Activated CD8-positive, alpha-beta T cell treated with anti-CD3 and anti-CD28 coated beads, Interleukin-2, amount 10 ng/mL, durations not matched to agents 7 days and 5 days (primary cell): ENCODE measurements at regions of chr4 and their contacts with region 1.

Region 1: DNA sequence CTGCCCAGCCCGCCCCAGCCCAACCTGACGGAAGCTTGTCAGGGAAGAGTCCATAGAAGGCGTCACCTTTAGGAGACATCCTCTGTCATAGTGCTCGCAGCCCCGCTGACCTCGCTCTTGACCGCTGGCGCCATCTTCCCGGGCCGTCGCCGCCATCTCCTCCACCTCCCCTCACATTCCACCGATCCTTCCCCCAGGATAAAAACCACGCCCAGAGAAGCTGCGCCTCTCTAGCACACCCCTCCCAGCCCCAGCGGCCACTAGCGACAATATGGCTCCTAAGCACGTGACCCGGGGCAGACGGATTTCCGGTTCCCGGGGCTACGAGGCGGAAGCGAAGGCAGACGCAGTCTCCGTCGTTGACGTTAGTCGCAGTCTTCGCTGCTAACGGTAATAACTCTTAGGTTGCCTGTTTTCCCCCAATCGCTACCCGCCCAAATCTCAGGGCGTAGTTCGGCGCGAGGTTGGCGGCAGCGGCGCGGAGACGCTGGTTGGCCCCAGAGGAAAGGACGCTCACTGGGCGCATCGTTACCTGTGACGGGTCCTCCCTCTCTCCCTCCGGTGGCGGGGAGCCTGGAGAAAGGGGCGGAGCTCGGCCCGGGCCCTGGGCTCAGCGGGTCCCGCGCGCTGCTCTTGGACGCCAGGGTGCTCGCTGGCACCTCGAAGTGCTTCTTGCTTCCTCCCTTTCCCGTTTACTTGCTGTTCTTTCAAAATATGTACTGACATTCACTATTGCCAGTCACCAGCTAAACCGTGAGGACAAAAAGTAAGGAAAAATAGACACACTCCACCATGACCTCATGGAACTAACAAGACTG is at the starts of genes RCHY1 and THAP6:
- DNase-seq: peak; percentile 95
- ATAC-seq: peak; percentile 94
- H3K4me3 Mint-ChIP-seq: no peak within 1 kb of the TSS
- H3K27ac Mint-ChIP-seq: peak within 1 kb of the TSS; percentile 100
- H3K4me1 Mint-ChIP-seq: peaks cover 47% of the 10 kb centered on the region
- H3K27me3 Mint-ChIP-seq: no peaks in the 10 kb centered on the region
- total RNA-seq, gene RCHY1: 20.0 to 25.3 TPM
- total RNA-seq, gene THAP6: 16.1 to 16.7 TPM

Region 2: GRCh38 chr4:74838746-74839370 is 675.5 kb before region 1 on chr4:
- CTCF ChIA-PET with region 1: no interaction called
- POLR2A ChIA-PET with region 1: no interaction called
- DNase-seq: no peak
- ATAC-seq: no peak
- H3K4me3 Mint-ChIP-seq: no peak overlapping the region
- H3K27ac Mint-ChIP-seq: no peak overlapping the region
- H3K4me1 Mint-ChIP-seq: no peaks in the 10 kb centered on the region
- H3K27me3 Mint-ChIP-seq: no peaks in the 10 kb centered on the region

Region 3: DNA sequence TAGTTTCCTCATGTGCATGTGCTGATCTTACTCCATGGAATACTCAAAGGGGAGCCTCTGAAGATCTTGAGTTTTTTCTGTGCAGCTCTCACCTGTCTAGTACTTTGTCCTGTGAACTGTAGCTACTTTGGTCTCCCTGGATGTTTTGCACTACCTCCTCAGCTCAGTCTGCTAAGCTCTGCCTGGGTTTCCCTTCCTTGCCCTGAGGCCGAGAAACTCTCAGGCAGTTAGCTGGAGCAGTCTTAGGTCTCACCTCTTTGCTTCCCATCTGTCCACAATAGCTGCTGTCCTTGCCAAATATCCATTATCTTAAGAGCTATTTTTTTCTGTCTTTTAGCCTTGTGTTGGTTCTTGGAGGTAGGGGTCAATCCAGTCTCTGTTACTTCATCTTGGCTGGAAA is 11.6 kb after region 1 on chr4:
- CTCF ChIA-PET with region 1: interaction called, 8 read pairs
- POLR2A ChIA-PET with region 1: interaction called, 13 read pairs
- DNase-seq: no peak
- ATAC-seq: no peak
- H3K4me3 Mint-ChIP-seq: no peak overlapping the region
- H3K27ac Mint-ChIP-seq: no peak overlapping the region
- H3K4me1 Mint-ChIP-seq: no peaks in the 10 kb centered on the region
- H3K27me3 Mint-ChIP-seq: no peaks in the 10 kb centered on the region

Region 4: DNA sequence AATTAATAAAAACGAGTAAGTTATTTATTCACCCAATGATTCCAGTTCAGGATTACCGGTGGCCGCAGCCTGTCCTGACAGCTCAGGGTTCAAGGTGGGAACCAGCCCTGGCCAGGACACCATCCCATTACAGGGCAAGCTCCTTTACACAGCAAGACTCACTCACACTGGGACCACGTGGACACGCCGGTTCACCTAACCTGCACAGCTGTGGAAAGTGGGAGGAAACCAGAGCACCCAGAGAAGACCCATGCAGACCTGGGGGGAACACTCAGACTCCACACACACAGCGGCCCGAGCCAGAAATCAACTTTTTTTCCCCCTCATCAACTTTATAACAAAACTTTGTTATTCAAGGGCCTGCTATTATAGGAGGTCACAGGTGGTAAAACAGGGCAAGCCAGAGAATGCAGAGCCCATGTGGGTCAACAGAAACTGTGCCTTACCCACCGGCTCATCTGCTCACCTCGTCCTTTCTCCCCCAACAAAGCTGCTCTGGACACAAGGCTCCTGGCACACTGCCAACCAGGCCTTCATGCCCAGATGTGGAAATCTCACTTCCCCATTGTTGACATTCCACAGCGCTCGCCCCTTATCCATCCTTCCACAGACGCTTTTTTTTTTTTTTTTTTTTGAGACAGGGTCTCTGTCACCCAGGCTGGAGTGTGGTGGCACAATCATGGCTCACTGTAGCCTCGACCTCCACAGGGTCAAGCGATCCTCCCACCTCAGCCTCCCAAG is 33.5 kb after region 1 on chr4:
- CTCF ChIA-PET with region 1: no interaction called
- POLR2A ChIA-PET with region 1: no interaction called
- DNase-seq: no peak
- ATAC-seq: no peak
- H3K4me3 Mint-ChIP-seq: no peak overlapping the region
- H3K27ac Mint-ChIP-seq: no peak overlapping the region
- H3K4me1 Mint-ChIP-seq: no peaks in the 10 kb centered on the region
- H3K27me3 Mint-ChIP-seq: no peaks in the 10 kb centered on the region

Region 5: GRCh38 chr4:75869100-75869499 is 354.8 kb after region 1 on chr4:
- CTCF ChIA-PET with region 1: no interaction called
- POLR2A ChIA-PET with region 1: no interaction called
- DNase-seq: no peak
- ATAC-seq: no peak
- H3K4me3 Mint-ChIP-seq: no peak overlapping the region
- H3K27ac Mint-ChIP-seq: no peak overlapping the region
- H3K4me1 Mint-ChIP-seq: no peaks in the 10 kb centered on the region
- H3K27me3 Mint-ChIP-seq: peaks cover 2% of the 10 kb centered on the region